B cell (primary cell): ENCODE measurements at regions of chr19 and their contacts with region 1.

Region 1: DNA sequence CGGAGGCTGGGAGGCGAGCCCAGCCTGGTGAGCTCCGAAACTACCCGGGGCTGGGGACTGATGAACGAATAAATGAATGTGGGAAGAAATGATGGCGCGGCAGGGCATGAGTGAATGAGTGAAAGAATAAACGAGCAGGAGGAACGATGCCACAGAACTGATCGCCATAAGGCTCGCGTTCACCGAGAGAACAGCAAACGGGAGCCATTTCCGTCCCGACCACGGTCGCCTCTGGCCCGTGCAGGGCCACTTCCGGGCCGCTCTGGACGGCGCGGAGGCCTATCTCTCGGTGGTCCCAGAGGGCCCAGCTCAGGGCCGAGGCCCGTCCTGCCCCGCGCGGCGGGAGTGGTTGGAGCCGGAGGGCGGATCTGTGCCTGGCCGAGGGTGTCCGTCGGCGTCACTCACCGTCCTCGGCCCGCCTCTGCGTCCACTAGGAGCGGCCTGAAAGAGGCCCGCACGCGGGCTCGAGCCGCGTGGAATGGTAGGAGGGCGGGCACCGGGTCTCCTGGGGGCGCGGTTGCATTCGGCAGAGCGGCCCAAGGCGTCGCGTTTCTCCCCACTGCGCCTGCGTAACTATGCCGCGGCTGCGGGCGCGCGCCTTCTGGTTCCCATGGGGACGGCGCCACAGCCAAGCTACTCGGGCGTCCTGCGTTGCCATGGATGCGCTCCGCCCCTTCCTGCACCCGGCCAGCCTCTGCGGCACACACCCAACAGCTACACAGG is at the start of gene ZNF497:
- DNase-seq: peak; percentile 99
- ATAC-seq: peak; percentile 83
- H3K4me3 ChIP-seq: peak within 1 kb of the TSS; percentile 69 to 90 (median 74)
- H3K4me3 Mint-ChIP-seq: peak within 1 kb of the TSS; percentile 95
- H3K27ac ChIP-seq: peak within 1 kb of the TSS; percentile 80 to 81
- H3K27ac Mint-ChIP-seq: peak within 1 kb of the TSS; percentile 97
- H3K4me1 ChIP-seq: peaks cover 11 to 30% of the 10 kb centered on the region in 2 donors
- H3K4me1 Mint-ChIP-seq: peaks cover 17% of the 10 kb centered on the region
- H3K27me3 ChIP-seq: peaks cover 0 to 13% (median 5%) of the 10 kb centered on the region in 4 experiments
- H3K27me3 Mint-ChIP-seq: peaks cover 3% of the 10 kb centered on the region
- CTCF ChIP-seq: no peak
- total RNA-seq, gene ZNF497: 2.7 and 4.4 TPM in 2 replicates

Region 2: DNA sequence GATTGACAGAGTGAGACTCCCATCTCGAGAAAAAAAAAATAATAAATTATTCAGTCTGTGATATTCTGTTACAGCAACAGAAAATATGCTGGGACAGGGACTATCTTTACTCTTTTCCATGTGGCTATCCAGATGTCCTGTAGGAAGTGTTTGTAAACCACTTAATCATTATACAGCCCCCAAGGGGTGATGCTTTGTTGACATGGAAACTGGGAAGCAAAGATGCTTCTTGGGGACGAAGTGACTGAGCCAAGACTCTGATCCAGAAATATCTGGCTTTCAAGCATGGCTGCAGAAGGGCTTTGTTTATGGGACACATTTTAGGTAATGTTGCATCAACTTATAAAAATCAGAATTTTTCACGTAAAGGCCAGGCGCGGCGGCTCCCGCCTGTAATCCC is 78.2 kb before region 1 on chr19:
- CTCF ChIA-PET with region 1: no interaction called
- POLR2A ChIA-PET with region 1: no interaction called
- intact Hi-C with region 1: no loop called
- DNase-seq: no peak
- ATAC-seq: no peak
- H3K4me3 ChIP-seq: no peak overlapping the region
- H3K4me3 Mint-ChIP-seq: no peak overlapping the region
- H3K27ac ChIP-seq: no peak overlapping the region
- H3K27ac Mint-ChIP-seq: no peak overlapping the region
- H3K4me1 ChIP-seq: peaks cover 10 to 14% of the 10 kb centered on the region in 2 donors
- H3K4me1 Mint-ChIP-seq: peaks cover 22% of the 10 kb centered on the region
- H3K27me3 ChIP-seq: no peaks in the 10 kb centered on the region
- H3K27me3 Mint-ChIP-seq: no peaks in the 10 kb centered on the region
- CTCF ChIP-seq: no peak

Region 3: DNA sequence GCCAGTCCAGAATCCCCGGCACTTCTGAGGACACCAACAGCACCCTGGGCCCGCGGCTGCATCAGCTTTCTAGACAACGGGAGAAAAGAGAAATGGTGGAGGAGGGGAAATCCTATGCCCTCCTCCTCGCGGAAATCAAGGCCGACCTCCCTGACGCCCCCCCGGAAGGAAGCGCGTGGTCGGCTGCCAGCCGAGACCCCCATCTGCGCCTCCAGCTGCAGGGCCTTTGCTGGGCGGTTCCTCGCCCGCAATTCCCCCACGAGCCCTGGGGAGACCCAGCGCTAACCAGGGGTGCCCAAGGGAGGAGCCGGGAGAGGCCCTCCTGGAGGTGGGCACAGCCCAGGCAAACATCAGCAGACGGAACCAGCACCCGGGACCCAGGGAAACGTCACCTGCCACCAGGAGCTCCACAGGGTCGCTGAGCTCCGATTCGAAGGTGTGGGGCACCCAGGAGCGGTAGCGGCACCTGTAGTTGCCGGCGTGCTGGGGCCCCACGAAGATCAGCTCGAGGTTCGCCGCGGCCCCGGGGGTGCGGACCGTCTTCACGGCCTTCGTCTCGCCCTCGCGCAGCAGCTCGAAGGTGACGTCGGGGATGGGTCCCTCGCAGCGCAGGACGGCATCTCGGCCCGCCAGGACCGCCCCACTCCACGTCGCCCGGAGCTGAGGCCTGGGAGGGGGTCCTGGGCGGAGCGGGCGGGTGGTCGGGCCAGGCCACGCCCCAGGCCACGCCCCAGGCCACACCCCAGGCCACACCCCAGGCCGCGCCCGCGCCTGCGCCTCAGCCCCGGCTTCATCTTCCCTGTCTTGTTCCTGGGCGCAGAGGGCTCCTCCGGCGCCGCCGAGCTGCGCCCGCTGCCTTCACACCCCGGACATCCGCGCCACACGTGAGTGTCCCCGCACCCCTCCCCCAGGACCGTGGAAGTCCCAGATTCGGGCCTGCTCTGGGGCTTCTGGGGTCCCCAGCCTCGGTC is 15.2 kb before region 1 on chr19:
- CTCF ChIA-PET with region 1: interaction called, 8 read pairs
- POLR2A ChIA-PET with region 1: interaction called, 23 read pairs
- intact Hi-C with region 1: loop called (anchors 1 kb)
- DNase-seq: peak; percentile 91
- ATAC-seq: peak; percentile 96
- H3K4me3 ChIP-seq: peak overlapping the region; percentile 47 to 75 (median 62)
- H3K4me3 Mint-ChIP-seq: peak overlapping the region; percentile 96
- H3K27ac ChIP-seq: peak overlapping the region; percentile 59 to 77
- H3K27ac Mint-ChIP-seq: peak overlapping the region; percentile 89
- H3K4me1 ChIP-seq: peaks cover 16 to 28% of the 10 kb centered on the region in 2 donors
- H3K4me1 Mint-ChIP-seq: peaks cover 30% of the 10 kb centered on the region
- H3K27me3 ChIP-seq: no peaks in the 10 kb centered on the region
- H3K27me3 Mint-ChIP-seq: no peaks in the 10 kb centered on the region
- CTCF ChIP-seq: no peak

Region 4: GRCh38 chr19:58400916-58401839 is 38.7 kb after region 1 on chr19:
- CTCF ChIA-PET with region 1: no interaction called
- POLR2A ChIA-PET with region 1: no interaction called
- intact Hi-C with region 1: loop called (anchors 1 kb)
- DNase-seq: peak; percentile 100
- ATAC-seq: peak; percentile 97
- H3K4me3 ChIP-seq: peak overlapping the region; percentile 32 to 69 (median 64)
- H3K4me3 Mint-ChIP-seq: peak overlapping the region; percentile 89
- H3K27ac ChIP-seq: peak overlapping the region; percentile 62 to 87
- H3K27ac Mint-ChIP-seq: peak overlapping the region; percentile 91
- H3K4me1 ChIP-seq: peaks cover 7 to 15% of the 10 kb centered on the region in 2 donors
- H3K4me1 Mint-ChIP-seq: peaks cover 7% of the 10 kb centered on the region
- H3K27me3 ChIP-seq: peaks cover 0 to 19% (median 7%) of the 10 kb centered on the region in 4 experiments
- H3K27me3 Mint-ChIP-seq: peaks cover 3% of the 10 kb centered on the region
- CTCF ChIP-seq: no peak

Region 5: GRCh38 chr19:58451358-58452101 is 89.1 kb after region 1 on chr19 and contains the start of gene ZNF324B:
- CTCF ChIA-PET with region 1: no interaction called
- POLR2A ChIA-PET with region 1: interaction called, 3 read pairs
- intact Hi-C with region 1: loop called (anchors 5 kb)
- DNase-seq: peak; percentile 97
- ATAC-seq: peak; percentile 97
- H3K4me3 ChIP-seq: peak within 1 kb of the TSS; percentile 55 to 81 (median 73)
- H3K4me3 Mint-ChIP-seq: peak within 1 kb of the TSS; percentile 93
- H3K27ac ChIP-seq: peak within 1 kb of the TSS in 1 of 2 donors; percentile 66
- H3K27ac Mint-ChIP-seq: peak within 1 kb of the TSS; percentile 85
- H3K4me1 ChIP-seq: peaks cover 5 to 12% of the 10 kb centered on the region in 2 donors
- H3K4me1 Mint-ChIP-seq: peaks cover 20% of the 10 kb centered on the region
- H3K27me3 ChIP-seq: peaks cover 0 to 24% (median 2%) of the 10 kb centered on the region in 4 experiments
- H3K27me3 Mint-ChIP-seq: peaks cover 13% of the 10 kb centered on the region
- CTCF ChIP-seq: no peak
- total RNA-seq, gene ZNF324B: 15.0 and 17.4 TPM in 2 replicates

Region 6: DNA sequence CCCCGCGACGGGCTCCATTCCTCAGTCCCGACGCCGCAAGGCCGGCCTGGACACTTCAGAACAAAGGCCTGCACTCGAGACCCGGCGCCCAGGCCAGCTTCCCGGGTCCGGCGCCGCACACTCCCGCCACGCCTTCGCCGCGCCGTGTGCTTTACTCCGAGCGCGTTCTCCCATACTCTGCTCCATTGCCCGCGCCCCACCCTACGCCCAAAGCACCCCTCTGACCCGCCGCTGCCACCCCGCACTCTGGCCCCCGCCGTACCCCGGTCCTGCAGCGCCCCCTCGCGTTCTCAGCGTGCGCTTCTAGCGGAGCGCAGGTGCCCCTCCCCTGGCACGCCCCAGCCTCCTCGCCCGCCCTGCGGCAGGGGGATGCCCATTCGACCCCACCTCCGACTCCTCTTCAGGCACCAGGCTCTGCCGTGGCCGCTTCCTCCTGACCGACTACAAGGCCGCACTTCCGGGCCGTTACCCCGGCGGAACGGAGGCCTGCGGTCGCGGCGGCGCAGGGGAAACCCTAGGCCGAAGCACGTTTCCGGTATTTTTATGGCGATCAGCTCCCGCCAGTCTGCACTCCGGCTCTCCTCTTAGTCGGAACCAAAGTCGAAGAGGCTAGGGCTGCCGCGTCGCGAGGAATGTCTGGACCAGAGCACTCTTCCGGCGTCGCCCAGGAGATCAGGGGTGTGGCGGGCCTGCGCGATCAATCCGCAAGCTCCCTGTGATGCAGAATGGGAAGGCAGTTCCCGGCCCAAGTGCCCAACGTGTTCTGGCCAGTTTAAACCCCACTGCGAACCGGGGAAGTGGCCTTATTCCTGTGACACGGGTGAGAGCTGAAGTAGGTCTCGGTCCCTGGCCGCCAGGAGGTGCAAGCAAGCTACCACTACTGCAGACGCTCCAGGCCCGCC is 157.2 kb after region 1 on chr19 and contains the start of gene ZBTB45:
- CTCF ChIA-PET with region 1: interaction called, 7 read pairs
- POLR2A ChIA-PET with region 1: interaction called, 15 read pairs
- intact Hi-C with region 1: no loop called
- DNase-seq: peak; percentile 96
- ATAC-seq: peak; percentile 84
- H3K4me3 ChIP-seq: peak within 1 kb of the TSS; percentile 64 to 78 (median 71)
- H3K4me3 Mint-ChIP-seq: peak within 1 kb of the TSS; percentile 98
- H3K27ac ChIP-seq: peak within 1 kb of the TSS; percentile 76 to 96
- H3K27ac Mint-ChIP-seq: peak within 1 kb of the TSS; percentile 99
- H3K4me1 ChIP-seq: peaks cover 18 to 28% of the 10 kb centered on the region in 2 donors
- H3K4me1 Mint-ChIP-seq: peaks cover 42% of the 10 kb centered on the region
- H3K27me3 ChIP-seq: no peaks in the 10 kb centered on the region
- H3K27me3 Mint-ChIP-seq: no peaks in the 10 kb centered on the region
- CTCF ChIP-seq: peak; percentile 72
- total RNA-seq, gene ZBTB45: 20.9 and 28.4 TPM in 2 replicates